ENCODE measurements at regions of chr14 and their contacts with region 1.

Region 1: DNA sequence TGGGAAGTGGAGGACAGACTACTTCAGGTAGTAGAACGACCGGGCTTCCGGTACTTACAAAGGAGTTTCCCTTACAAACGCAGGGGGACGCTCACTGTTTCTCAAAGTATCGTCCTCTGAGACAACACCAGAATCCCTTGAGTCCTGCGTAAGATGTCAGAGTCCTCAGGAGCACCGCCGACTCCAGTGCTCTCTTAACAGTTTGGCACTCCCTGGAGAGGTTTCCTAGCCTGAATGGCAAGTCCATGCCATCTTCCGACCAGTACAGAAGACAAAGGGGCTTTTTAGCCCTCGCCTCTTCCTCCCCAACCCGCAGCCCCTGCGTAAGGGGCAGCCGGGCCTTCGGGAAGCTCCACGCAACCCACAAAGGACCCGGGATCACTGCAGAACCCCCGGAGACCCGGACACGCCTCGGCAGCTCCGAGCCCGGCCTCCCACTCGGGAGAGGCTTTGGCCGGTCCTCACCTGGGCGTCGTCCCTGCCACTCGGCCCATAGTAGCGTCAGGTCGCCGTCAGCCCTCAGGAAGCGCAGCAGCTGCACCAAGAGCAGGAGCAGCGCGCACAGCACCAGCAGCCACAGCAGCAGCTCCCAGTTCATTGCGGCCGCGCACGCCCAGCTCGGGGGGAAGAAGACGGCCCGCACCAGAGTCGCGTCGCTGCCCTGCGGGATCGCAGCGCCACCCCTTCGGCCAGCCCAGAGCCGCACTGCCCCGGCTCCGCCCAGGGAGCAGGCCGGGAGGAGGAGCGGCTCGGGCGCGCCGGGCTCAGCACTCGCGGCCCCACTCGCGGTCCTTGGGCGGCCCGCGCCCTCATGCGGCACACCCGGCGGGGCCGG is at the start of gene DHRS7:
- DNase-seq: peak; percentile 93
- ATAC-seq: peak; percentile 99
- total RNA-seq, gene DHRS7: 34.4 TPM

Region 2: DNA sequence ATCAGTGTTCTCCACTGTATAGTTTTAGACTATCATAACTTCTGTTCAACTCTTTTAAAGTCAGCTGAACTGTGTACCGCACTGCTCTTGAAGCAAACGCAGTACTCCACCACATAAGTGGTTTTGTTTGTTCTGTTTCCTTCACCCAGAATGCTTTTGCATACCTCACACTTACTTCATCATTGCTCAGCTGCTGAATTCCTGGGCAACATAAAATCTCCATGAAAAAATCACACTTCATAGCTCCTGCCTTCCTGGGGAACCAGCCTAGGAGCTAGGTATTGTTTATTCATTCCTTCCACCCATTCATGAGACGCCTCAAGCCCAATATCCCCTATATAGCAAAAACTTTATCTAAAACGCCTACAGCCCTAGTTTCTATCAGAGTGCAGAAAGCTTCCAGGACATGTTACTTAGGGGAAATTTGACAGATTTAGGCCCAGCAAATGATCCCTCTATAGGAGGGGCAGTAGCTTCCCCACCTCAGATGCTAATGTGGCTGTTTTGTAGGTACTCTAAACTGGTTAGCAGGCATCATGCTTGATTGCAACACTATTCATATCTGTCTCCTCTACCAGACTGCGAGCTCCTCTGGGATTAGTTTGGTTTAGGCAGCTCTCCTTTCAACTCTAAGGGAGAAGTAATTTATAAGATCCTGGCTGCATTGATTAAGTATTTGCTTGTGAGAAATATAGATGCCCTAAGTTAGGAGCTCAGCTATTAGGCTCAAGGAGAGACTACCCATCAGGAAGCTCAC is 200.5 kb before region 1 on chr14:
- intact Hi-C with region 1: loop called (anchors 5 kb)
- DNase-seq: no peak
- ATAC-seq: no peak

Region 3: GRCh38 chr14:59986556-59987059 is 178.3 kb before region 1 on chr14:
- intact Hi-C with region 1: no loop called
- DNase-seq: no peak
- ATAC-seq: no peak

Measured in Right ventricle myocardium superior (tissue), 1 donor.